Panc1 (cell line): ENCODE measurements at regions of chr18 and their contacts with region 1.

Region 1: DNA sequence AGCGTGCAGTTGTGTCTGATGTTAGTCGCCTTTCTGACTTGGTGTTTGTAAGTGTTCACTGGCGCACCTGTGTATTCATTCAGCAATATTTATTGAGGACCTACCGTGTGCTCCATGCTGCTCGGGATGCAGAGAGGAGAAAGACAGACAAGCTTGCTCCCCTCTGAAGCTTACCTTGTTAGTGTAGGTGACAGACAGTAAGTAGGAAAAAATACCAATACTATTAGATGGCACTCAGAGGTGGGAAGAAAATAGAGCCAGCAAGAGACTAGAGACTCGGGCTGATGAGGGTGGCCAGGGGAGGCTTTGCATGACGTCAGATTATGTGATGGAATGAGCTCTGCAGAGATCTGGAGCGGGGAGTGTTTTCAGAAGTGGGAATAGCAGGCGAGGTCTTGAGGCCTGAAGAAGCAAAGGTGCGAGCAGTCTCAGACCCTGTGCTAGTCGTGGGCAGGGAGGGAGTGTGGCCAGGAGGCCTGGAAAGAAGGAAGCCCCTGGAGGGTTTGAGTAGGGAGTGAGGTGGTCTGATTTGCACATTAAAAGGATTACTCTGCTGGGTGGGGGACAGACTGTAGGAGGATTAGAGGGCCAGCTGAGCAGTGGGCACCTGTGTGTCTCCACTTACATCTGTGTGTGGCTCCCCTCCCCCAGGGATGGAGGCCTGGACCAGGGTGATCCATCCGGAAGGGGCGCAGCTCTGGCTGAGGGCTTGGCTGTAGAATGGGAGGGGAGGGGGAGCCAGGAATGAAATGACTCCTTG is 11.8 kb downstream of the MTCL1 start:
- DNase-seq: no peak
- ATAC-seq: 0 out of 2 replicates have a peak, but pooled peaks have one; percentile 44
- H3K4me3 ChIP-seq: no peak overlapping the region
- H3K27ac ChIP-seq: no peak overlapping the region
- H3K4me1 ChIP-seq: peaks cover 15% of the 10 kb centered on the region
- H3K27me3 ChIP-seq: no peaks in the 10 kb centered on the region
- CTCF ChIP-seq: no peak

Region 2: DNA sequence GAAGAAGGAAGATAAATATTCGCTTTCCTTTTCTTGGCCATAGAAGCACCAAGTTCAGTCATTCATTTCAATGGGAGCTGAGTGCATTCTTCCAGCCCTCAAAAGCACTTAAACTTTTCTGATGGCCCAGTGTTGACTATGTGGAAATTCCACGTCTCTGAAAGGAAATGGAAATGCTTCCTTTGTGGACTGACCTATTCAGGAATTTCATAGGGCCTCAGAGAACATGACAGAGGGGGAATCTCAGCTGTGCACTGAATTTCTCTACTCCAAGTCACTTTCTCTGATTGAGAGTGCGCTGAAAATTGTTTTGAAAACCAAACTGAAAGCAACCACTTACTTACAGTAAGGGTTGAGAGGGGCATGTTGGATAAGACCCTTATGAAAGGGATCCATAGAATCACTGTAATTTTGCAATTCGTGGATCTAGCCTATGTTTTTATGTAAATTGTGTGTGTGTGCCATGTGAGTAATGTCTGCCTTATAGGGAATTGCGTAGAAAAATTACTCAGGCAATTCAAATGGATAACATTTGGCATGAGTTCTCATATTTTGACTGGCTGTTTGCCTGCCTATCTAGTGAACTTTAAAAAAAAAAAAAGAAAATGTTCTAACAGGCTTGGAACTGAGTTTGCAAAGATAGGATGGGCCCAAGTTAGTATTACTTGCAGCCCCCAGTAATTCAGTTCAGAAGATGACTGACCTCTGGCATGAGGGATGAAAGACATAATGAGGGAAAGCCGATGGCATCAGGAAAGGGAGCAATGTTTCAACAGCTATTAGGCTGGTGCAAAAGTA is 713.1 kb before region 1 on chr18:
- CTCF ChIA-PET with region 1: no interaction called
- POLR2A ChIA-PET with region 1: no interaction called
- in situ Hi-C with region 1: no loop called
- intact Hi-C with region 1: no loop called
- DNase-seq: no peak
- ATAC-seq: no peak
- H3K4me3 ChIP-seq: no peak overlapping the region
- H3K27ac ChIP-seq: no peak overlapping the region
- H3K4me1 ChIP-seq: no peaks in the 10 kb centered on the region
- H3K27me3 ChIP-seq: no peaks in the 10 kb centered on the region
- CTCF ChIP-seq: no peak

Region 3: DNA sequence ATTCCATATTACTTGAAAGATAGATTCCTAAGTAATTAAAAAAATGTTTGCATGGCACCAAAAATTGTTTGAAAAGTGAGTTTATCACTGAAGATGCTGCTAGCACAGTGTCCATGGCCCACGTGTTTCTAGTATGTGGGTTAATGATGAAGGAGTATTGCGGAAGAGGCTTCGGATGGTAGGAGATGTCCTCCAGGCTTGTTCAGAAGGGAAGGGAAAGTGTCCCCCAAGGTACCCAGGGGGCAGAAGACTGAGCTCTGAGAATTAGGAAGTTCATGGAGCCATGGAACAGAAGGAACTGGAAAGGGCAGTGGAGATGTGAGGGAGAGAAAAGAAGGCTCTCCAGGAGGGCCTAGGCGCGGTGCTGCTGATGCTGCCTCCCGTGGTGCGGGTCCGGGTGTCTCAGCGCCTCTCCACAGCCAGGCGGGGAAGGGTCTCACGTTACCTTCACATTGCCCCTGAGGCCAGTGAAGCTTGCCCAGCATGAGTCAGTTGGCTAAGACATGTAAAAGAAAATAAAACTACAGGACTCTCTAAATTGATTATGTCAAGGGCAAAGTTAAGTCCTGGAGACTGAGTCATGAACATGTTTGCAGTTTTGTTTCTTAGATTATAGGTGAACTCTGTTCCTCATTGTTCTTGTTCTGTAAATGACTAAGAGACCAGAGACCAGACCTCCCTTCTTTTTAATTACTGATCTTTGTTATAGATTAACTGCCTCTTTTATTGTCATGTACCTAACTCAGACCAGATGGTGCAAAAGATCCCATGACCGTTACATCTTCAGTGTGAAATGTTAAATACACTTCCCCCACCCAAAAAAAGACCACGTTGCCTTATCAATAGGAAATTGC is 77.2 kb after region 1 on chr18:
- CTCF ChIA-PET with region 1: no interaction called
- POLR2A ChIA-PET with region 1: no interaction called
- in situ Hi-C with region 1: no loop called
- intact Hi-C with region 1: loop called (anchors 10 kb)
- DNase-seq: no peak
- ATAC-seq: peak; percentile 63
- H3K4me3 ChIP-seq: no peak overlapping the region
- H3K27ac ChIP-seq: peak overlapping the region; percentile 68
- H3K4me1 ChIP-seq: peaks cover 40% of the 10 kb centered on the region
- H3K27me3 ChIP-seq: no peaks in the 10 kb centered on the region
- CTCF ChIP-seq: no peak